Endothelial cell of umbilical vein (primary cell): ENCODE measurements at regions of chr1 and their contacts with region 1.

Region 1: DNA sequence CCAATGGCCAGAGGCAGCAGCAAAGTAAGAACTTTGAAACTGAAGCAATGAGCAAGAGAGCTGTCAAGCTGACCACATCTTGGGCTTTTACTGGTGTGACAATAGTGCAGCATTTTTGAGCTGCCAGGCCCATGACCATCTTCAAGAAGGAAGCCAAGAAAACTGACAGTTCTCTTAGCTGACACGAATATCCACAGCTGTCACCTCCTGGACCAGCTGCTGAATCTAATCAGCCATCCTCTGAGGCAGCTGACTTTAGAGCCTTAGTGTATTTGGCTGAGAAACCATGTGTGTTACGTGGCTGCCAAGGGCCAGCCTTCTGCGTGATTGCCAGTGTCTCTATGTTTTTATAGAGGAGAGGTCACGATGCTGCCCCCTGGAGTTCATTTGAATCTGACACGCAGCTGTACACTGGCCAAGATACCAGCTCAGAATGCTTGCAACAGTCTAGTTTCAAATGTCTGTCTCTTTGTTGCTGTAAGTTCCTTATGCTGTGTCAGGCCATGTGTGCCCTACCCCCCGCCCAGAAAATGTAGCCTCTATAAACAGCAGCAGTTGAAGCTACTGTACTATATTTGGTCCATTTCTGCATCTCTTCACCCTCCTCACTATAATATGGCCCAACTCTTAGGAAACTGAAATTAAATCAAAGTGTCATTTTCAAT is 39.7 kb downstream of the PALMD start:
- DNase-seq: peak; percentile 95
- H3K4me3 ChIP-seq: no peak overlapping the region
- H3K27ac ChIP-seq: peak overlapping the region; percentile 48
- H3K4me1 ChIP-seq: peaks cover 57% of the 10 kb centered on the region
- H3K27me3 ChIP-seq: no peaks in the 10 kb centered on the region
- CTCF ChIP-seq: peak; percentile 63 to 67
- POLR2A ChIP-seq: peak; percentile 67

Region 2: DNA sequence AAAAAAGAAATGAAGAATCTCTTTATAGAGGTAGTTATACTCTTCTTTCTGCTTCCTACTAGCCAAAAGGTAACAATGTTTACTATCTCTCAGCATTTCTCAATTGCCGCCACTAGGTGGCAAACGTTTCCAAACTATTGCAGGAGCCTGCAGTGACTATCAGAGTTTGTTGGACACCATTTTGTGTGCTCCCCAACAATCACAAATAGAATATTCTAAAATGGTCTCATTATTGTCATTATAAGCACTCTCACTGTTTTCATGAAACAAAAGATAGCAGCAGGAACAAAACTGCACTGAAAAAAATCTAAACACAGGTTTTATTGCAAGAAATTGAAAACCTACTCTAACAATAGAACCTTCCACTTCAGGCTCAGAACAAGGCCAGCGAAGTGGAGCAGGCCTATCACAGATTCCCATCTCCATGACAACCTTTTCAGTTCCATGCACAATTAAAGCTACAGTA is 505.3 kb before region 1 on chr1:
- CTCF ChIA-PET with region 1: interaction called, 16 read pairs
- POLR2A ChIA-PET with region 1: no interaction called
- dilution Hi-C with region 1: no loop called
- intact Hi-C with region 1: loop called (anchors 1 kb)
- DNase-seq: peak; percentile 90
- H3K4me3 ChIP-seq: no peak overlapping the region
- H3K27ac ChIP-seq: no peak overlapping the region
- H3K4me1 ChIP-seq: no peaks in the 10 kb centered on the region
- H3K27me3 ChIP-seq: no peaks in the 10 kb centered on the region
- CTCF ChIP-seq: peak; percentile 57 to 68
- POLR2A ChIP-seq: no peak

Region 3: DNA sequence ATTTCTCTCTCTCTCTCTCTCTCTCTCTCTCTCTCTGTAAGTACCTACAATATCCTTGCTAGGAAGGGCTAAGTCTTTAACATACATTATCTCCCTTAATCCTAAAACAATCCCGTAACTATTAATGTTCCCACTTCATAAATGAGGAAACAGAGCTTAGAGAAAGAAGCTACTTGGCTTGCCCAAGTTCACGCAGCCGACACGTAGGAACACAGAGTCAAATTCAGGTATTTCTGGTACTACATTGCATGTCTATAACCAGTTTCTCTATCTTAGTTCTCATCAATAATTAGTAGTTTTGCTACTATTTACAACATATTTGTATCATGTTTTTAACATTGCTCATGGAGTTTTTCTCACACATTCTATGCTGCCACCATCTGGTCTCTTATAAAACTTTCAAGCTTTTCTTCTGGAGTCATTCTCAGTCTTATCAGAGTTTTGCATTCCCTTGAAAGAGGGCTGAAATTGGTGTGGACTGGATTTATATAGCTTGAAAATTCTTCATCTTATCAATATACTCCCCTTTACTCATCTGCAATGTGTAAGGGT is 158.6 kb before region 1 on chr1:
- CTCF ChIA-PET with region 1: interaction called, 16 read pairs
- POLR2A ChIA-PET with region 1: no interaction called
- dilution Hi-C with region 1: no loop called
- intact Hi-C with region 1: no loop called
- DNase-seq: peak; percentile 57
- H3K4me3 ChIP-seq: no peak overlapping the region
- H3K27ac ChIP-seq: no peak overlapping the region
- H3K4me1 ChIP-seq: no peaks in the 10 kb centered on the region
- H3K27me3 ChIP-seq: no peaks in the 10 kb centered on the region
- CTCF ChIP-seq: peak in 1 of 2 donors; percentile 21
- POLR2A ChIP-seq: no peak

Region 4: GRCh38 chr1:99590578-99591209 is 95.0 kb before region 1 on chr1:
- CTCF ChIA-PET with region 1: interaction called, 7 read pairs
- POLR2A ChIA-PET with region 1: no interaction called
- dilution Hi-C with region 1: no loop called
- intact Hi-C with region 1: loop called (anchors 2 kb)
- DNase-seq: peak; percentile 99
- H3K4me3 ChIP-seq: no peak overlapping the region
- H3K27ac ChIP-seq: peak overlapping the region; percentile 97
- H3K4me1 ChIP-seq: peaks cover 59% of the 10 kb centered on the region
- H3K27me3 ChIP-seq: no peaks in the 10 kb centered on the region
- CTCF ChIP-seq: no peak
- POLR2A ChIP-seq: peak; percentile 61

Region 5: DNA sequence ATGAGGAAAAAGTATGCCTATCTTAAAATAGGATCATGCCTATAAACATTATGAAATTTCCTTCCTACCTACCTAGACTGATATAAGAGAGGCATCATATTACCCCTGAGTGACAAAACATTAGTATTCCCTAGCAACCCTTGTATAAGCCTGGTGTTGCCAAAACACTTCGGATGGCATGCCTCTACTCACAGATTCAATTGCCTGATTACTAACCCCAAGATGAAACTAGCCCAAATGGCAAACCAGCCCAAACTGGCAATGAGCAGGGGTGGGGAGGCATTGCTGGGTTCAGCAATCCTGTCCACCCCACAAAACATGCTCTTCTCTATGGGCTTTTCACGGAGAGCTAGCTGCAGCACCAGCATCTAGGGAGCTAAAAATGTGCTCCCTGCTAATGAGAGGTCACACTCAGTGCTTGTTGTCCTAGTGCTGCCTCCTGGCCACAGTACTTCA is 25.9 kb before region 1 on chr1:
- CTCF ChIA-PET with region 1: interaction called, 11 read pairs
- POLR2A ChIA-PET with region 1: no interaction called
- dilution Hi-C with region 1: no loop called
- intact Hi-C with region 1: loop called (anchors 1 kb)
- DNase-seq: peak; percentile 91
- H3K4me3 ChIP-seq: no peak overlapping the region
- H3K27ac ChIP-seq: peak overlapping the region; percentile 62
- H3K4me1 ChIP-seq: peaks cover 81% of the 10 kb centered on the region
- H3K27me3 ChIP-seq: no peaks in the 10 kb centered on the region
- CTCF ChIP-seq: no peak
- POLR2A ChIP-seq: no peak

Region 6: GRCh38 chr1:99672500-99673213 is 13.0 kb before region 1 on chr1:
- CTCF ChIA-PET with region 1: interaction called, 13 read pairs
- POLR2A ChIA-PET with region 1: interaction called, 3 read pairs
- dilution Hi-C with region 1: no loop called
- intact Hi-C with region 1: loop called (anchors 1 kb)
- DNase-seq: peak; percentile 42
- H3K4me3 ChIP-seq: no peak overlapping the region
- H3K27ac ChIP-seq: peak overlapping the region; percentile 36
- H3K4me1 ChIP-seq: peaks cover 24% of the 10 kb centered on the region
- H3K27me3 ChIP-seq: no peaks in the 10 kb centered on the region
- CTCF ChIP-seq: no peak
- POLR2A ChIP-seq: no peak

Region 7: DNA sequence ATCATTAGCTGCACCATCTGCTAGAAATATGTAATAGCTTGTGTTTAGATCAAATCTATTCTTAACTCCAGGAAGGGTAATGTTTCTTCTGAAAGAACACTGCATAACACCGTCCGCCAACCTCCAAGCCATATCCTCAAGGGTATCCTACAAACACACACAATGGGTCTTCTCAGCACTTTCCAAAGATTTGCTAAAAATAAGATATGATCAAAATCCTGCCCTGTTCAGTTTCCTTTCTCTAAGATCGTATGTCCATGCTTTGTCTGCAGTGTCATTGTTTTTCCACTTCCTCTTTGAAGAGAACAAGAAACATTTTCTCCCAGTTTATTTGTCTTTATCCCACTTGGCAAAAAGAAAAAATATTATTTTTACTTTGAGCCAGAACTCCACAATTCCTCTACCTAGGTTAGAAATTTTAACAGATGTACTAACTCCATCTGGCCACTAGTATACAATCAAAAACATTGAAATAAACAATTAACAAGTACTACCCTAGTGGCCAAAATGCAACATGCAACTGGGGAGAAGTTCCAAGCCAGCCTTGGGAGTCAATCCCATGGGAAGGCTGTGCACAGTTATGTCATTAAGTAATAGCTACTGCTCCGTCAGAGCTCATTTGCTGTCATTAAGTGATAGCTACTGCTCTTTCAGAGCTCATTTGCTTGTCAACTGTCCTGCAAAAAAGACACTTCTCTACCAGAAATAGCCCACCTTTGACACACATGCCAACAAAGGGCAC is 43.0 kb after region 1 on chr1:
- CTCF ChIA-PET with region 1: no interaction called
- POLR2A ChIA-PET with region 1: no interaction called
- dilution Hi-C with region 1: no loop called
- intact Hi-C with region 1: loop called (anchors 2 kb)
- DNase-seq: peak; percentile 74
- H3K4me3 ChIP-seq: peak overlapping the region in 1 of 3 experiments; percentile 34
- H3K27ac ChIP-seq: peak overlapping the region; percentile 13
- H3K4me1 ChIP-seq: peaks cover 19% of the 10 kb centered on the region
- H3K27me3 ChIP-seq: no peaks in the 10 kb centered on the region
- CTCF ChIP-seq: peak; percentile 41 to 70
- POLR2A ChIP-seq: no peak